Activated T-helper 1 cell treated with anti-CD3 and anti-CD28 coated beads, Interleukin-12 subunit alpha, Interleukin-12 subunit beta, Interleukin-2, Interleukin-4 antibody, amounts not matched to agents 30 ng/mL and 10 ng/mL and 1 ng/mL, durations not matched to agents 14 hours and 24 hours and 36 hours (primary cell): ENCODE measurements at regions of chr9 and their contacts with region 1.

Region 1: GRCh38 chr9:127734747-127735529 is at the start of gene TOR2A:
- DNase-seq: peak; percentile 98
- H3K4me3 Mint-ChIP-seq: peak within 1 kb of the TSS; percentile 89
- H3K27ac Mint-ChIP-seq: peak within 1 kb of the TSS; percentile 96
- H3K4me1 Mint-ChIP-seq: peaks cover 15% of the 10 kb centered on the region
- H3K27me3 Mint-ChIP-seq: no peaks in the 10 kb centered on the region
- total RNA-seq, gene TOR2A: 16.6 and 18.9 TPM in 2 replicates

Region 2: GRCh38 chr9:127224178-127224882 is 510.6 kb before region 1 on chr9:
- intact Hi-C with region 1: no loop called
- DNase-seq: peak; percentile 82
- H3K4me3 Mint-ChIP-seq: peak overlapping the region; percentile 85
- H3K27ac Mint-ChIP-seq: peak overlapping the region; percentile 97
- H3K4me1 Mint-ChIP-seq: peaks cover 18% of the 10 kb centered on the region
- H3K27me3 Mint-ChIP-seq: peaks cover 42% of the 10 kb centered on the region

Region 3: GRCh38 chr9:127503947-127504782 is 230.8 kb before region 1 on chr9:
- intact Hi-C with region 1: loop called (anchors 1 kb)
- DNase-seq: peak; percentile 70
- H3K4me3 Mint-ChIP-seq: no peak overlapping the region
- H3K27ac Mint-ChIP-seq: no peak overlapping the region
- H3K4me1 Mint-ChIP-seq: peaks cover 5% of the 10 kb centered on the region
- H3K27me3 Mint-ChIP-seq: no peaks in the 10 kb centered on the region

Region 4: DNA sequence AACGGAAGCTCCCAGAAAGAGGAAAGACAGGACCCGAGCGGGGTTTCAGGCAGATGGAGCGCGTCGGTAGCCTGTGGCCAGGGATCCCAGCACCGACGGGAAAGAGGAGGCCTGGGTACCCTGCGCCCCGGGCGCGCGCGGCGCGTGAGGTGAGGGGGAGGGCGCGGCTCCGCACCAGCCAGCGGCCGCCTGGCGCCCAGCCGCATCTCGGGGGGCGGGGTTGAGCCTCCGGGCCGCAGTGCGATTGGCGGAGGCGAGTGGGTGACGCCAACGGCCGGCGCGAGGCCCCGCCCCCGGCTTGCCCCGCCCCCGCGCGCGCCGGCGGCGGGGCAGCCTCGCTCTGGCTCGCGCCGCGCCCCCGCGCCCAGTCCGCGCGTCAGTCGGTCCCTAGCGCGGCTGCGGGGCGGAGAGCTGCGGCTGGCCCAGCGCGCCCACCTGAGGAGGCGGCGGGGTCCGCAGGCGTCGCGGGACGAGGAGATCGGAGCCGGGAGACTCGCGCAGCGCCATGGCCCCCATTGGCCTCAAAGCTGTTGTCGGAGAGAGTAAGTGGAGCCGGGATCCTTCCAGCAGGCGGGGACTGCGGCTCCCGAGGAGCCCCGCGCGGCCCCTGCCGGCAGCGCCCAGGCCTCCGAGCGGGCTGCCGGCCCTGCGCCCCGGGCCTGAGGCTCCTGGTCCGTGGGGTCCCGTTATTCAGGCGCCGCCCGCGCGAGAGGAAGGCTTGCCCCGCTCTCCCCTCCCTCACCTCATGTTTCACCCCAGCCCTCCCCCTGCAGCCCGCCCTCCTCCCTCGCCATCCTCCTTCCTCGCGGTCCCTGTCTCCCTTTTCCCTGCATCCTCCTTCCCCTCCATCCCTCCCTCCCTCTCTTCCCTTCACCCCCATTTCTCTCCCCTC is 122.8 kb before region 1 on chr9 and contains the start of gene STXBP1:
- intact Hi-C with region 1: loop called (anchors 1 kb)
- DNase-seq: peak; percentile 89
- H3K4me3 Mint-ChIP-seq: peak within 1 kb of the TSS; percentile 95
- H3K27ac Mint-ChIP-seq: peak within 1 kb of the TSS; percentile 91
- H3K4me1 Mint-ChIP-seq: peaks cover 40% of the 10 kb centered on the region
- H3K27me3 Mint-ChIP-seq: peaks cover 45% of the 10 kb centered on the region
- total RNA-seq, gene STXBP1: 26.1 and 32.9 TPM in 2 replicates

Region 5: GRCh38 chr9:127707726-127708147 is 27.2 kb before region 1 on chr9:
- intact Hi-C with region 1: no loop called
- DNase-seq: no peak
- H3K4me3 Mint-ChIP-seq: no peak overlapping the region
- H3K27ac Mint-ChIP-seq: no peak overlapping the region
- H3K4me1 Mint-ChIP-seq: peaks cover 7% of the 10 kb centered on the region
- H3K27me3 Mint-ChIP-seq: peaks cover 2% of the 10 kb centered on the region

Region 6: DNA sequence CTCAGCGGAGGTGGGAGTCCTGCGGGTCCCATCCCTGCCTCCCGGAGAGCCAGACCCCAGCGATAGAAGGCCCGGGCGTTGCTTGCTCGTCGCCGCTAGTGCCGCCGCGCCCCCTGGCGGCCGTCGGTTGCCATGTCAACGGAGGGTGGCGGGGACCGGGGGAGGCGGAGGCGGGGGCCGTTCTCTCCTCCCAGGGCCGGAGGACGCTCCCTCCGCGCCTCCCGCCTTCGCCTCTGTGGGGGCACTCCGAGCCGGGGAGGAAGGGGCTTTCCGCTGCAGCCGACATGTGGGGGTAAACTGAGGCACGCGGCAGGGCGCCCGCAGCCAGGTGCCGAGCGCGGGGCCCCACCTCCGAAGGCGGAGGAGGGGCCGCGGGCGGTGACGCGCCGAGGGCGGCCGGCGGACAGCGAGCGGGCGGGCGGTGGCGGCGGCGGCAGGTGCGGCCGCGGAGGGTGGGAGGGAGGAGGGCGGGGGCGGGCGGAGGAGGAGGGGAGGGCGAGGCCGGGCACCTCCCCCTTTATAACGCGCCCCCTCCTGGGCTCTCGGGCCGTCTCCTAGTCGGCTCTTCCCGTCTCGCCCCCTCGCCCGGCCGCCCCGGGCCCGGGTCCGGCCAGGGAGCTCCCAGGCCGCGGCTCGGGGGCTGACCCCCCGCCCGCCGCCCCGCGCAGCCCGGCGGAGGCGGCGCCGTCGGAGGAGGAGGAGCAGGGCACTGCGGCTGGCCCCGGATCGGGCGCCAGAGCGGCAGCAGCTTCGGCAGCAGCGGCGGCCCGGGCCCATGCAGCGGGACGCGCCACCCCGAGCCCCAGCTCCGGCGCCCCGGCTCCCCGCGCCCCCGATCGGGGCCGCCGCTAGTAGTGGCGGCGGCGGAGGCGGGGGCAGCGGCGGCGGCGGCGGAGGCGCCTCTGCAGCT is 50.3 kb after region 1 on chr9:
- intact Hi-C with region 1: loop called (anchors 1 kb)
- DNase-seq: peak; percentile 87
- H3K4me3 Mint-ChIP-seq: peak overlapping the region; percentile 96
- H3K27ac Mint-ChIP-seq: peak overlapping the region; percentile 99
- H3K4me1 Mint-ChIP-seq: peaks cover 67% of the 10 kb centered on the region
- H3K27me3 Mint-ChIP-seq: no peaks in the 10 kb centered on the region

Region 7: DNA sequence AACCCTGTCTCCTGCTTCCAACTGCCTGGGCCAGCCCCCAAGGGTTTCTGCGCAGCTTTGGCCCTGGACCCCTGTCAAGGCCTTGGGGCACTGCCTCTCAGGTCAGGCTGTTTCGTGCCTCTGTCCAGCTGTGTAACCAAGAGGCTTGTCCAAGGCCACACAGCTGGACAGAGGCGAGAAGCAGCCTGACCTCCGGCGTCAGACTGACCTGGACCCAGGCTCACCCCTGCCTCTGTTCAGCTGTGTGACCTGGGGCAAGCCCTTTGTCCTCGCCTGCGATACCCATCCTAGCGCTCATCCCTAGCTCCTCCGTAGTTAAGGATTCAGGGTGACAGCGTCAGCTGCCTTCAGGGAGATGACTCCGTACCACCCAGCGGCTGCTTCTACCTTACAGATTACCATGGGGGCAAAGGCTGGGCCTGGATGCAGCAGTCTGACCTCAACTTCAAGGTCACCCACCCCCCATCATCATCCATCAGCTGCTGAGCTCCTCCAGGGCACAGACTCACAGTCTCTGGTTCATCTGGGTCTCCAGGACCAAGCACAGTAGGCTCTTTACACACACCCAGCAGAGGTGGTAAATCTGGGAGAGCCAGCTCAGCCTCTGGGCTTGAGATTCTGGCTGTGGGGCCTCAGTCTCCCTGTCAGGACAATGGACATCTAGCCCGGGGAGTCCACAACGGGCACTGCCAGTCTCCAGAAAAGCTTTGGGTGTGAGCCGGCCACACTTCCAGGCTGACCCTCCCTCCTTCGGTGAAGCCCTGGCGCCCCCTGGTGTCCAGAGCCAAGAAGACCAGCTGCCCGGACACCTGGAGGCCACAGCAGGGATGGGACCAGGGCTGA is 134.6 kb after region 1 on chr9:
- intact Hi-C with region 1: loop called (anchors 1 kb)
- DNase-seq: peak; percentile 69
- H3K4me3 Mint-ChIP-seq: no peak overlapping the region
- H3K27ac Mint-ChIP-seq: no peak overlapping the region
- H3K4me1 Mint-ChIP-seq: peaks cover 12% of the 10 kb centered on the region
- H3K27me3 Mint-ChIP-seq: no peaks in the 10 kb centered on the region